ENCODE measurements at regions of chr4 and their contacts with region 1.

Region 1: GRCh38 chr4:69322055-69322454 is 41.8 kb downstream of the UGT2B28 start:
- DNase-seq: peak; percentile 17
- H3K4me3 Mint-ChIP-seq: no peak overlapping the region
- H3K27ac Mint-ChIP-seq: no peak overlapping the region
- H3K4me1 Mint-ChIP-seq: peaks cover 13% of the 10 kb centered on the region
- H3K27me3 Mint-ChIP-seq: no peaks in the 10 kb centered on the region
- CTCF ChIP-seq: no peak

Region 2: DNA sequence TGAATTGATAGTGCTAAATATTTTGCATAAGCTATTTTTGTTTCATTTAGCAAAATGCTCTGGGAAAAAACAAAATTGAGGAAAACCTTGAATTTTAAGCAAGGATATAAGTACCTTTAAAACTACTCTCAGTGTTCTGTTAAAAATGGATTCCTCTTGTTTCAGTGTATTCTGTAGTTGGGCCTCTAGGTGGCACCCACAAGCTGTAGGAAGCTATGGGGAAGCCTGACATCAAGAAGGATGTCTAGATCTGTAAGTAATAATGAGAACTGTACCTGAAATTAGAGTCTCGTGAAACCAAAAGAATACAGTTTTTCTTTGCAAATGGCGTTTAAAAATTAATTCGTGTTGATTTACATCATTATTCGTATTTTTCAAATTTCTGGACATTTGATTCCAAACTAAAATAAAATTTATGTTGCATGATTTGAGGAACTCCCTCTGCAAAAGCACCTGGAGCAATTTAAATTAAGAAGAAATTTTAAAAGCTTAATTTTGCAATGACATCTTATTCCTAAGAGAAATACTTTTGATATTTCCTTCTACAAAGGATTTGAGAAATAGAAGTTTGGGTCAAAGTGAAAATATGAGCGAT is 823.5 kb before region 1 on chr4:
- CTCF ChIA-PET with region 1: interaction called, 4 read pairs
- POLR2A ChIA-PET with region 1: no interaction called
- intact Hi-C with region 1: loop called (anchors 5 kb)
- DNase-seq: peak; percentile 79
- H3K4me3 Mint-ChIP-seq: no peak overlapping the region
- H3K27ac Mint-ChIP-seq: no peak overlapping the region
- H3K4me1 Mint-ChIP-seq: no peaks in the 10 kb centered on the region
- H3K27me3 Mint-ChIP-seq: no peaks in the 10 kb centered on the region
- CTCF ChIP-seq: peak; percentile 88

Region 3: DNA sequence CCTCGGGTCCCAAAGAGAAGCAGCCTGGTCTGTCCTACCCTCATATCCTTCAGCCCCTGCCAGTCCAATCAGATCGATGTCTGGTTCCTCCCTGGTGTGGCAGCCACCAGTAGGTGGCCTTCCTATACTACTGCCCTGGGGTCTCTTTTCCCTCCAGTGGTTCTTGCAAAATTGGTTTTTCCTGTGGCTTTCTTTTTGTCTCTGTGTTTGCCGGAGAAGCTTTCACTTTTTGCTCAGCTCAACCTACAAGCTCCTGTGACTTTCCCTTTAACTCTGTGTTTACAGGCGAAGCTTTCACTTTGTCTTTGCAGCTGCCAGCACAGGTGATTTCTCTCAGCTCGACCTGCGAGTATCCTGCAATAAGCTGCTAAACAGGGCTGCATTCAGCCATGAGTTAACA is 417.3 kb before region 1 on chr4:
- CTCF ChIA-PET with region 1: no interaction called
- POLR2A ChIA-PET with region 1: no interaction called
- intact Hi-C with region 1: no loop called
- DNase-seq: no peak
- H3K4me3 Mint-ChIP-seq: peak overlapping the region; percentile 9
- H3K27ac Mint-ChIP-seq: no peak overlapping the region
- H3K4me1 Mint-ChIP-seq: peaks cover 16% of the 10 kb centered on the region
- H3K27me3 Mint-ChIP-seq: no peaks in the 10 kb centered on the region
- CTCF ChIP-seq: no peak

Region 4: DNA sequence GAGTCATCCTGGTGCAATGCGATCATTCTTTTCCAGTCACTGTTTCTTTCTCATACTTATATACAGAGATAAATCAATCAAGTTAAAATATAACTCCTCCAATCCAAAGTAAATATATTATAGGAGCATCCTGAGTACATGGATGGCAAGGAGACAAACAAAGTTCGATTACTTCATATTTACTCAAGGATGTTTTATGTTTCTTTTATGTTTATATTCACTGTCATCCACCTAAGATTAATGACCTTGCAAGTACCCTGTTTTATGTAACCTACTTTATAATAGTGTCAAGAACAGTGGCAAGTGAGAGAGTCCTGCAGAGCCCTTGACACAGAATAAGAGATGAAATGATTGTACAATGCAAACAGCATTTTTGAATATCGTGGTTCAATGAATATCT is 107.3 kb before region 1 on chr4 and contains the start of gene UGT2B11:
- CTCF ChIA-PET with region 1: no interaction called
- POLR2A ChIA-PET with region 1: no interaction called
- intact Hi-C with region 1: no loop called
- DNase-seq: no peak
- H3K4me3 Mint-ChIP-seq: no peak within 1 kb of the TSS
- H3K27ac Mint-ChIP-seq: no peak within 1 kb of the TSS
- H3K4me1 Mint-ChIP-seq: no peaks in the 10 kb centered on the region
- H3K27me3 Mint-ChIP-seq: no peaks in the 10 kb centered on the region
- CTCF ChIP-seq: no peak
- total RNA-seq, gene UGT2B11: not detected in 2 replicates

Region 5: DNA sequence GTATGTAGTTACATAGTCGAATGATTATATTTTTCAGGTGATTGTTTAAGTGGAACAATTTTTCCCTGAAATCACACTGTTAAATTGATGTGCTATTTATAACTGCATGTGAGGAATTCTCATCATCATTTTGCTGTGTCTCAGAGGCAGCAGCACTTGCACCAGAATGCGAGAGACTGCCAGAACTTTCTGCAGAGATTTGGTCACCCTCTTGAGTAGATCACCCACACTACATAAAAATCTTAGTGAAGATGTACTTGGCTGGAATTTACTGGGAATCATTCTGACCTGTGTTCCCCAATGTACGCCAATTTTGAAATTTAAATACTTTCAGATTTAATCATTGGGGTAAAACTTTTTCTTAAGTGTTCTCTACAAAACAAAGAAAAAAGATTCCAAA is 168.2 kb after region 1 on chr4:
- CTCF ChIA-PET with region 1: no interaction called
- POLR2A ChIA-PET with region 1: no interaction called
- intact Hi-C with region 1: no loop called
- DNase-seq: no peak
- H3K4me3 Mint-ChIP-seq: no peak overlapping the region
- H3K27ac Mint-ChIP-seq: no peak overlapping the region
- H3K4me1 Mint-ChIP-seq: no peaks in the 10 kb centered on the region
- H3K27me3 Mint-ChIP-seq: peaks cover 54% of the 10 kb centered on the region
- CTCF ChIP-seq: no peak

Region 6: GRCh38 chr4:69610484-69610883 is 288.4 kb after region 1 on chr4:
- CTCF ChIA-PET with region 1: interaction called, 57 read pairs
- POLR2A ChIA-PET with region 1: interaction called, 3 read pairs
- intact Hi-C with region 1: no loop called
- DNase-seq: no peak
- H3K4me3 Mint-ChIP-seq: no peak overlapping the region
- H3K27ac Mint-ChIP-seq: no peak overlapping the region
- H3K4me1 Mint-ChIP-seq: no peaks in the 10 kb centered on the region
- H3K27me3 Mint-ChIP-seq: peaks cover 59% of the 10 kb centered on the region
- CTCF ChIP-seq: no peak

Region 7: GRCh38 chr4:69617083-69617694 is 295.1 kb after region 1 on chr4:
- CTCF ChIA-PET with region 1: interaction called, 57 read pairs
- POLR2A ChIA-PET with region 1: interaction called, 3 read pairs
- intact Hi-C with region 1: loop called (anchors 1 kb)
- DNase-seq: peak; percentile 66
- H3K4me3 Mint-ChIP-seq: no peak overlapping the region
- H3K27ac Mint-ChIP-seq: no peak overlapping the region
- H3K4me1 Mint-ChIP-seq: no peaks in the 10 kb centered on the region
- H3K27me3 Mint-ChIP-seq: peaks cover 43% of the 10 kb centered on the region
- CTCF ChIP-seq: peak; percentile 62

Measured in MCF 10A (cell line).